GM12878 (cell line): ENCODE measurements at regions of chr10 and their contacts with region 1.

Region 1: DNA sequence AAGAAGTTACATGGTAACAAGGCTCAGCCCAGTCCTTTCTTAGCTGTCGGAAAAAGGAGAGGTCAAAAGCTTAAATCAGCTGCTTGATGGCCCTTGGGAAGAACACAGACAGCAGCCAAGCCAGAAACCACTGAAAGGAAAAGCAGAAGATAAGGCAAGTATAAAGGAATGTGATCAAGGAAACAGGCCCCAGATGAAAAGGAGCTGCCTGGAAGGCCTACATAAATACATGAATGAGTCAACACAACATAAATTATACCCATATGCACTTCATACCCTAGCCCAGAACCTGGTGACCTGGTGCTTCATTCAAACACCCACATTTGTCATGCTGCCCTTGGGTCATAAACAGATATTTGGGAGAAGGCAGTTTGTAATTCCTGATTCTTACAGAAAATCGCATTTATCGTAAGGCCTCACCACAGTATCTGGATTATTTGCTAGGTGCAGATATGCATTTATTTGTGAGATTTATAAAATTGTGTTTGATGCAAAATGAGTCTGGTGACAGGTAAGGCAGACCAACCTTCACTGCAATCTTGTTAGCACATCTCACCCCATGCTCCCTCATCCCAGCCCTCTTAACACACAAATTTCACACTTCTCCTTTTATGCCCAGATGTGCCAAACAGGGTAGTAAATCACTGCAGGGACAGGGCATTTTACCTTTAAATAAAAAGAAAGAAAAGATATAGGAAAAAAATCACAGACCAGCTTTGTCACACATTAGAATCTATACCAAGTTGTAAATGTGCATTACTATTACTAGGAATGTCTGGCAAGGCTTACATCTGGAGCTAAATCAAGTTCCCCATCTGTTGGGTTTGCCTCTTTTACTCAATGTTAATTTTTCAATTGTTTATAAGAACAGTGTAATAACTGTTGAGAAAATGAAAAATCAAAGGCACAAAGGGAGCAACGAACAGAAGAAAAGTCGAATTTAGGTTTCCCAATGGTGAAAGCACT is 95.0 kb upstream of the KCNIP2 start:
- DNase-seq: no peak
- ATAC-seq: no peak
- H3K4me3 ChIP-seq: no peak overlapping the region
- H3K27ac ChIP-seq: peak overlapping the region; percentile 18; the same call in 1 of the 2 replicates
- H3K4me1 ChIP-seq: peaks cover 4% of the 10 kb centered on the region
- H3K27me3 ChIP-seq: no peaks in the 10 kb centered on the region
- CTCF ChIP-seq: no peak
- EP300 ChIP-seq: no peak
- POLR2A ChIP-seq: no peak
- RAD21 ChIP-seq: no peak

Region 2: GRCh38 chr10:101961591-101962498 is 23.2 kb after region 1 on chr10:
- CTCF ChIA-PET with region 1: no interaction called
- POLR2A ChIA-PET with region 1: interaction called, 5 read pairs
- RAD21 ChIA-PET with region 1: interaction called, 3 read pairs
- SMC1A ChIA-PET with region 1: interaction called, 45 read pairs
- in situ Hi-C with region 1: no loop called
- intact Hi-C with region 1: no loop called
- DNase-seq: no peak
- ATAC-seq: no peak
- H3K4me3 ChIP-seq: no peak overlapping the region
- H3K27ac ChIP-seq: no peak overlapping the region
- H3K4me1 ChIP-seq: peaks cover 18% of the 10 kb centered on the region
- H3K27me3 ChIP-seq: no peaks in the 10 kb centered on the region
- CTCF ChIP-seq: no peak
- EP300 ChIP-seq: no peak
- POLR2A ChIP-seq: no peak
- RAD21 ChIP-seq: no peak

Region 3: GRCh38 chr10:102120142-102120990 is 181.8 kb after region 1 on chr10 and contains the start of gene LDB1:
- CTCF ChIA-PET with region 1: no interaction called
- POLR2A ChIA-PET with region 1: no interaction called
- RAD21 ChIA-PET with region 1: no interaction called
- SMC1A ChIA-PET with region 1: no interaction called
- in situ Hi-C with region 1: no loop called
- intact Hi-C with region 1: no loop called
- DNase-seq: no peak
- ATAC-seq: peak; percentile 73
- H3K4me3 ChIP-seq: peak within 1 kb of the TSS; percentile 98
- H3K27ac ChIP-seq: peak within 1 kb of the TSS; percentile 90
- H3K4me1 ChIP-seq: peaks cover 44% of the 10 kb centered on the region
- H3K27me3 ChIP-seq: no peaks in the 10 kb centered on the region
- CTCF ChIP-seq: no peak; a peak in 1 of 6 replicates
- EP300 ChIP-seq: no peak
- POLR2A ChIP-seq: peak; percentile 91
- RAD21 ChIP-seq: no peak
- polyA plus RNA-seq, gene LDB1: 1.7 to 2.3 TPM